ENCODE measurements at regions of chr17 and their contacts with region 1.

Region 1: DNA sequence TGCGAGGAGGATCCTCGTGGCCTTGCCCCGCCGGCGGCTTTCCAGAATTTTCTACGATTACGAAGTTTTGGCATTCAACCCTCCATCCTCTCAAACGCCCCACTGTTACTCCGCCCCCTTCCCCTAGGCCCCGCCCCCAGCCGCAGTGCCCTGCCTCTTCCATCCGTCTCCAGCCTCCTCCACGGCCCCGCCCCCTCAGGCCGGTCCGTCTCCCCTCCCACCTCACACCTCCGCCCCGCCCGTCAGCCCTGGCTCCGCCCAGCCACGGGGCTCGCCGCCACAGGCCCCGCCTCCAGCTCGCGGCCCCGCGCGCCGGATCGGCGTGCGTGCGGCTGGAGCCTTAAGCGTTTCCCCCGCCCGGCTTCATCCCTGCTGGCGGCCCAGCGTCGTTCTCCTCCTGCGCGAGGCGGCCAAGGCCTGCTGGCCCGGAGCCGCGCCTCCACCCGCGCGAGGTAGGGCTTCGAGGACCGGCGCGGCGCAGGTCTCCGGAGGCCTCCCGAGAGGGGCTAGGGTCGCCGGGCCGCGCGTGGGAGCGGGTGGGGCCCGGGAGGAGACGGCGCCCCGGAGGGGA is at the starts of genes C17orf67 and DGKE:
- DNase-seq: peak; percentile 95 to 100 (median 98)
- ATAC-seq: peak; percentile 78 to 83
- H3K4me3 Mint-ChIP-seq: peak within 1 kb of the TSS; percentile 89 to 98 (median 96)
- H3K27ac Mint-ChIP-seq: peak within 1 kb of the TSS; percentile 79 to 97 (median 94)
- H3K4me1 Mint-ChIP-seq: peaks cover 31 to 72% (median 70%) of the 10 kb centered on the region in 4 donors
- H3K27me3 Mint-ChIP-seq: no peaks in the 10 kb centered on the region
- polyA plus RNA-seq, gene C17orf67: 1.5 to 2.2 (median 1.6) TPM
- polyA plus RNA-seq, gene DGKE: 3.8 to 4.7 (median 4.1) TPM

Region 2: DNA sequence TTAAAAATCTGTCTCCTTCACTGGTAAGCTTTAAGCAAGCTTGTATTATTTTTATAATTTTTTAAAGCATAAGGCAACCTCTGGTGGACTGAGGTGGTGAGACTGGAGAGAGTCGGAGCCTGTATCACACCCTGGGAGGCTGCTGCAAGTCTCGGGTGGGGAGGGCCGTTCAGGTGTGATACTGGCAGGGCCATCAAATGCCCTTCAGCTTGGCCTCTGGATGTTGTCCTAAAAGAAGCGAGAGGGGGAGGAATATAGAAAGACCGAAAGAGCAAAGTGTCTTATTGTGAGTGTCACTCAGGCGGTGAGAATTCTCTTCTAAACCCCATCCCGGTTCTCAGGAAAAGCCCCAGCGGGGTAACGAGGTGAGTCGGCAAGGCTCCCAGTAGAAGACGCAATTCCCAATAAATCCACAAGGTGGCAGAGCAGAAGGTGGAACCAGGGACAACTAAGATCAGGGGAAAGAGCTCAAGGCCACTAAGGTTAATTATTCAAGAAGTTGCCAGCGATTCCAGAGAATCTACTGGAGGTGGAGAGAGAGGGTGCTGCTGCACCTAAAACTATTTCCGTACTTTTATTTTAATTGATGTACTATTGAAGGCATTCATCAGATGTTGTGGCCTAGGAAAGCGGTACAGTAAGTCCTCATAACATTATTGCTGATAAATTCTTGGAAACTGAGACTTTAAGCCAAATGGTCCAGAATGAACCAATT is 14.3 kb before region 1 on chr17:
- POLR2A ChIA-PET with region 1: interaction called, 17 read pairs
- DNase-seq: peak; percentile 36 to 83 (median 70)
- ATAC-seq: peak; percentile 80 to 89
- H3K4me3 Mint-ChIP-seq: peak overlapping the region in 1 of 10 donors; percentile 38
- H3K27ac Mint-ChIP-seq: peak overlapping the region in 1 of 10 donors; percentile 45
- H3K4me1 Mint-ChIP-seq: peaks cover 3 to 13% (median 6%) of the 10 kb centered on the region in 4 donors
- H3K27me3 Mint-ChIP-seq: peaks cover 0 to 2% (median 0%) of the 10 kb centered on the region in 5 donors

Region 3: GRCh38 chr17:56867948-56868376 is 34.1 kb after region 1 on chr17:
- POLR2A ChIA-PET with region 1: no interaction called
- DNase-seq: no peak
- ATAC-seq: no peak
- H3K4me3 Mint-ChIP-seq: no peak overlapping the region
- H3K27ac Mint-ChIP-seq: peak overlapping the region in 4 of 10 donors; percentile 11 to 63 (median 52)
- H3K4me1 Mint-ChIP-seq: peaks cover 0 to 4% (median 0%) of the 10 kb centered on the region in 4 donors
- H3K27me3 Mint-ChIP-seq: peaks cover 0 to under 1% (median 0%) of the 10 kb centered on the region in 5 donors

Region 4: GRCh38 chr17:56913864-56914640 is 80.2 kb after region 1 on chr17 and contains the start of gene TRIM25:
- POLR2A ChIA-PET with region 1: interaction called, 20 read pairs
- DNase-seq: peak; percentile 73 to 92 (median 84)
- ATAC-seq: peak; percentile 89 to 92
- H3K4me3 Mint-ChIP-seq: peak within 1 kb of the TSS; percentile 77 to 97 (median 94)
- H3K27ac Mint-ChIP-seq: peak within 1 kb of the TSS; percentile 86 to 97 (median 94)
- H3K4me1 Mint-ChIP-seq: peaks cover 17 to 54% (median 49%) of the 10 kb centered on the region in 4 donors
- H3K27me3 Mint-ChIP-seq: no peaks in the 10 kb centered on the region
- polyA plus RNA-seq, gene TRIM25: 5.1 to 5.4 (median 5.2) TPM

Measured in naive thymus-derived CD8-positive, alpha-beta T cell (primary cell).